SK-MEL-5 (cell line): ENCODE measurements at regions of chr5 and their contacts with region 1.

Region 1: GRCh38 chr5:142548739-142549275 is 137.1 kb downstream of the FGF1 start:
- DNase-seq: peak; percentile 94

Region 2: GRCh38 chr5:142175039-142175438 is 373.8 kb before region 1 on chr5:
- in situ Hi-C with region 1: loop called (anchors 10 kb)
- DNase-seq: no peak

Region 3: DNA sequence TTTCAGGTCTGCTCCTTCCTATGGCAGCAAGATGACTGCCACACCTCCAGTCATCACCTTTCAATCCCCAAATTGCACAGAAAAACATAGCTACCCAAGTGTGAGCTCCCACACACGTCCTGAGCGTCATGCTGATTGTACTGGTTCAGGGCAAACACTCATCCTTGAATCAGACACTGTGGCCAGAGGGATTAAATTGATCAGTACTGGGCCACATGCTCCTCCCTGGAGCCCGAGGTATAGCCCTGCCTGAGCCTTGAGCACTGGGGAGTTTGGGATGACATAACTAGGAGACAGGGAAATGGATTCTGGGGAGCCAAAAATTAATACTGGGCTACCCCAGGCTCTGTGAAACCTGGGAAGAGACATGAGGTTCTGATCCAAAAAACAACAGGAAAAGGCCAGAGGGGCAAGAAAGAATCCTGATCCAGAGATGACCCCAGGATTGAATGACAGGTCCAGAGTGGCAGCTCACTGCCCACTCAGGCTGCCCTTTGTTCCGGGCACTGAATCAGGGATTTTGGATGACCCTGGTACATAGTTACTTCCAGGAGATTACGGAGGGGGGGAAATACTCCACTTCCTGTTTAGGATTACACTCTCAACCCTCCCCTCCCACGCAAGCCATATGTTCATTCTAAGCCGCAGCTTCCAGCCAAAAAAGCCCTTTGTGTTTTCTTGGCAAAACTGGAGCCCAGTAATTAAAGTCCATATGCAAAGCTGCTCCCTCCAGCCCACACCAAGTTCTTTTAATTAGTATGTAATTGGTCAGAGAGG is 82.4 kb before region 1 on chr5:
- in situ Hi-C with region 1: loop called (anchors 10 kb)
- DNase-seq: peak; percentile 40

Region 4: GRCh38 chr5:142800776-142801494 is 252.1 kb after region 1 on chr5:
- in situ Hi-C with region 1: no loop called
- DNase-seq: no peak